HCT116 (cell line): ENCODE measurements at regions of chr1 and their contacts with region 1.

Region 1: DNA sequence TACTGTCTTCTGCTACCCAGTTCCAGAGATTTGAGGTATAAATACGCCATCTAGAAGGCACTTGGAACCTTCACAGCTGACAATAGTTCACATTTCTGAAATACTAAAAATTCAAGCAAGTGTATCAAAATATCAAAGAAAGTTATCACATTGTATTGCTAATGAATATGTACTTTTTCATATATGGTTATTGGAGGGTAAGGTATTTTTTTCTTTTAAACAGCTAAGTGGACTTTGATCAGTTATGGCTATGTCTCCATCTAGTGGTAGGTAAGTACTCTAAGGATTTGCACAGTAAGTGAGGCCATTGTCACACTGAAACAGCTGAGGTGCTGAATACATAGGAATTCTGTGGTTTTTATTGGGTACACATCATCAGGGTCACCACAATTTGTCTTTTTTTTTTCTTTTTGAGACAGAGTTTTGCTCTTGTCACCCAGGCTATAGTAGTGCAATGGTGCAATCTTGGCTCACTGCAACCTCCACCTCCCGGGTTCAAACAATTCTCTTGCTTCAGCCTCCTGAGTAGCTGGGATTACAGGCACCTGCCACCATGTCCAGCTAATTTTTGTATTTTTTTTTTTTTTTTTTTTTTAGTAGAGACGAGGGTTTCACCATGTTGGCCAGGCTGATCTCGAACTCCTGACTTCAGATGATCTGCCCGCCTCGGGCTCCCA is 49.1 kb upstream of the CR2 start:
- DNase-seq: peak; percentile 65
- ATAC-seq: peak; percentile 87
- H3K4me3 ChIP-seq: no peak overlapping the region
- H3K27ac ChIP-seq: no peak overlapping the region
- H3K4me1 ChIP-seq: no peaks in the 10 kb centered on the region
- H3K27me3 ChIP-seq: no peaks in the 10 kb centered on the region
- CTCF ChIP-seq: peak; percentile 63 to 96 (median 77)
- POLR2A ChIP-seq: no peak
- RAD21 ChIP-seq: peak; percentile 95

Region 2: DNA sequence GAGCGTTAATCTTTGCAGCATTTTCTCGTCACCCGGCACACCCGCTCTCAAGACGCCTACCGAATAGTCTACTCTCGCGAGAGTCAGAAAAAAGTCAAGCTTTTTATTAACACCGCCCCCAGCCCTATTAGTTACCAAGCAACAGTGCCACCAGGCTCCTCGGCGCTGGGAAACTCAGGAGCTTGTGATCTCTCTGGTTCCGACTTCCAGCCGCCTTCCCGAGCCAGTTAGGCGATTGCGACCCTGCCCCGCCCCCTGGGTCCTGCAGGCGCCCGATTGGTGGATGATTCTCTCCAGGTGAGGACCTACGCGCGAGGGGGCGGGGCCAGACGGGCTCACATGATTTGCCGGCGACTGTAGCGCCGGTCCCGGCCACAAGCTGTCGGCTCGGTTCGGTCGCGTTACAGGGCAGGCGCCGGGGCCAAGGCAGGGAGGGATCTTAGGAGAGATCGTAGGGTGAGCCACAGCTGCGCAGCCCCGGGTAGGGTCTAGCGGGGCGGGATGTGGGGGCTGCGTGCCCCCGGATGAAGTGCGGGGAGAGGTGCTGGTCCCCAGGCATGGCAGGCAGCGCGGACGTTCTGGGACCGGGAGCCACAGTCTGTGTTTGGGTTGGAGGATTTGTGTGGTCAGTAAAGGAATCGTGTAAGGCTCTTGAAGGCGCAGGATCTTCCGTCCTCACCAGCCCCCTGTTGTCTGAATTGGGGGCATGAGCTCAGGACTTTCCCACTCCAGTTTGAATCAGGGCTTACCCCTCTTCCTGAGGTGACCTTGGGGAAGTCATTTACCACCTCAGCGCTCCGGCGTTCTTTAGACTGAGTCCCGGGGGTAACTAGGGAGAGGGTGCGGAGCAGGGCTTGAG is 351.8 kb before region 1 on chr1 and contains the start of gene PFKFB2:
- CTCF ChIA-PET with region 1: interaction called, 13 read pairs
- POLR2A ChIA-PET with region 1: interaction called, 3 read pairs
- RAD21 ChIA-PET with region 1: no interaction called
- intact Hi-C with region 1: no loop called
- DNase-seq: peak; percentile 99
- ATAC-seq: peak; percentile 89
- H3K4me3 ChIP-seq: peak within 1 kb of the TSS; percentile 88 to 90
- H3K27ac ChIP-seq: peak within 1 kb of the TSS; percentile 85
- H3K4me1 ChIP-seq: peaks cover 11 to 29% of the 10 kb centered on the region in 2 experiments
- H3K27me3 ChIP-seq: no peaks in the 10 kb centered on the region
- CTCF ChIP-seq: 0 out of 6 replicates have a peak, but pooled peaks of 1 of the 3 experiments have one; percentile 19
- POLR2A ChIP-seq: peak; percentile 72
- RAD21 ChIP-seq: no peak
- total RNA-seq, gene PFKFB2: 13.9 TPM

Region 3: GRCh38 chr1:207077470-207078377 is 327.3 kb before region 1 on chr1:
- CTCF ChIA-PET with region 1: interaction called, 19 read pairs
- POLR2A ChIA-PET with region 1: no interaction called
- RAD21 ChIA-PET with region 1: no interaction called
- intact Hi-C with region 1: loop called (anchors 2 kb)
- DNase-seq: peak; percentile 51
- ATAC-seq: peak; percentile 91
- H3K4me3 ChIP-seq: no peak overlapping the region
- H3K27ac ChIP-seq: no peak overlapping the region
- H3K4me1 ChIP-seq: no peaks in the 10 kb centered on the region
- H3K27me3 ChIP-seq: no peaks in the 10 kb centered on the region
- CTCF ChIP-seq: peak; percentile 82 to 87 (median 84); a peak in 5 of 6 replicates
- POLR2A ChIP-seq: no peak
- RAD21 ChIP-seq: peak; percentile 93

Region 4: GRCh38 chr1:207084701-207085180 is 320.2 kb before region 1 on chr1:
- CTCF ChIA-PET with region 1: interaction called, 49 read pairs
- POLR2A ChIA-PET with region 1: no interaction called
- RAD21 ChIA-PET with region 1: interaction called, 4 to 12 read pairs
- intact Hi-C with region 1: loop called (anchors 1 kb)
- DNase-seq: peak; percentile 69
- ATAC-seq: peak; percentile 99
- H3K4me3 ChIP-seq: no peak overlapping the region
- H3K27ac ChIP-seq: no peak overlapping the region
- H3K4me1 ChIP-seq: peaks cover 0 to 4% of the 10 kb centered on the region in 2 experiments; a peak in 2 of 4 replicates
- H3K27me3 ChIP-seq: 0 out of 2 replicates have a peak, but pooled peaks cover 3% of the 10 kb centered on the region
- CTCF ChIP-seq: peak; percentile 61 to 84 (median 62)
- POLR2A ChIP-seq: no peak
- RAD21 ChIP-seq: peak; percentile 85

Region 5: GRCh38 chr1:207128336-207128921 is 276.6 kb before region 1 on chr1:
- CTCF ChIA-PET with region 1: no interaction called
- POLR2A ChIA-PET with region 1: no interaction called
- RAD21 ChIA-PET with region 1: no interaction called
- intact Hi-C with region 1: no loop called
- DNase-seq: no peak
- ATAC-seq: no peak
- H3K4me3 ChIP-seq: no peak overlapping the region
- H3K27ac ChIP-seq: no peak overlapping the region
- H3K4me1 ChIP-seq: no peaks in the 10 kb centered on the region
- H3K27me3 ChIP-seq: no peaks in the 10 kb centered on the region
- CTCF ChIP-seq: no peak
- POLR2A ChIP-seq: no peak
- RAD21 ChIP-seq: no peak

Region 6: GRCh38 chr1:207152792-207153434 is 252.1 kb before region 1 on chr1:
- CTCF ChIA-PET with region 1: no interaction called
- POLR2A ChIA-PET with region 1: no interaction called
- RAD21 ChIA-PET with region 1: no interaction called
- intact Hi-C with region 1: loop called (anchors 10 kb)
- DNase-seq: peak; percentile 99
- ATAC-seq: peak; percentile 94
- H3K4me3 ChIP-seq: peak overlapping the region; percentile 61 to 93
- H3K27ac ChIP-seq: peak overlapping the region; percentile 92
- H3K4me1 ChIP-seq: peaks cover 2% of the 10 kb centered on the region in 2 experiments; a peak in 1 of 4 replicates
- H3K27me3 ChIP-seq: no peaks in the 10 kb centered on the region
- CTCF ChIP-seq: no peak
- POLR2A ChIP-seq: peak; percentile 72
- RAD21 ChIP-seq: 0 out of 2 replicates have a peak, but pooled peaks have one; percentile 26

Region 7: DNA sequence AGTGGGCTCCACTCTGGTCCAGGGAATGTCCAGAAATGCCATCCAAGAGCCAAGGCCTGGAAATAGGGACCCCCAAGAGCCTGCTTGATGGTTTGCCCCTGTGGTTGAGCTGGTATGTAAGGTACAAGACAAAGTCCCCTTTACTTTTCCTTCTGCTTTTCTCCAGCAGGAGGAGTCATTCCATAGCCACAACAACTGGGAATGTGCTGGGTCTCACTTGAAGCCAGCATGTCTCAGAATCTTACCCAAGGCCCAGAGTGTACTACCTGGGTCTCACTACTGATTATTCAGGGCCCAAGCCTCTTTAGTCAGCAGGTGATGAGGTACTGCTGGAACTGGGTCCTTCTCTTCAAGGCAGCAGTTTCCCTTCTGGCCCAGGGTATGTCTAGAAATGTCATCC is 145.6 kb before region 1 on chr1:
- CTCF ChIA-PET with region 1: interaction called, 25 read pairs
- POLR2A ChIA-PET with region 1: no interaction called
- RAD21 ChIA-PET with region 1: interaction called, 4 to 5 read pairs
- intact Hi-C with region 1: loop called (anchors 1 kb)
- DNase-seq: peak; percentile 27
- ATAC-seq: peak; percentile 79
- H3K4me3 ChIP-seq: no peak overlapping the region
- H3K27ac ChIP-seq: no peak overlapping the region
- H3K4me1 ChIP-seq: no peaks in the 10 kb centered on the region
- H3K27me3 ChIP-seq: no peaks in the 10 kb centered on the region
- CTCF ChIP-seq: peak; percentile 56 to 66 (median 59); a peak in 5 of 6 replicates
- POLR2A ChIP-seq: no peak
- RAD21 ChIP-seq: peak; percentile 84

Region 8: DNA sequence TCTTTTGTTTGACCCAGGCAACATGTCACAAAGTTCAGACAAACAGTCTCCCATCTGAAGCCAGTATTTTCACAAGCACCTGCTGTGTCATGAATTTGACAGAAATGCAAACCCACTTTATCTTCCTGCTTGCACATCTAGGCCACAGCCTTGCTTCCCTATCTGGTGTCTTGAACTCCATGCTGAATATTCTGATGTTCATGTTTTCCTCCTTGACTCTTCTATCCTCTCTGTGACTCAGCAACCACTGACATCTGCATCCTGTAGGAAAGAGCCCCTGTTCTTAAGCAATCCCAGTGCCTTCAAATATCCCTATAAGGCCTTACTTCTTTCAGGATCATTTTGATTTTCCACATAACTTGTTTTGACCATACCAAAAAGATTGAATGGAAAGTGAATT is 77.0 kb before region 1 on chr1:
- CTCF ChIA-PET with region 1: no interaction called
- POLR2A ChIA-PET with region 1: no interaction called
- RAD21 ChIA-PET with region 1: no interaction called
- intact Hi-C with region 1: no loop called
- DNase-seq: no peak
- ATAC-seq: no peak
- H3K4me3 ChIP-seq: no peak overlapping the region
- H3K27ac ChIP-seq: no peak overlapping the region
- H3K4me1 ChIP-seq: no peaks in the 10 kb centered on the region
- H3K27me3 ChIP-seq: no peaks in the 10 kb centered on the region
- CTCF ChIP-seq: no peak
- POLR2A ChIP-seq: no peak
- RAD21 ChIP-seq: no peak

Region 9: GRCh38 chr1:207423560-207424292 is 18.7 kb after region 1 on chr1:
- CTCF ChIA-PET with region 1: no interaction called
- POLR2A ChIA-PET with region 1: no interaction called
- RAD21 ChIA-PET with region 1: no interaction called
- intact Hi-C with region 1: no loop called
- DNase-seq: no peak
- ATAC-seq: peak; percentile 80
- H3K4me3 ChIP-seq: peak overlapping the region; percentile 1 to 4; a peak in 1 of 4 replicates
- H3K27ac ChIP-seq: no peak overlapping the region
- H3K4me1 ChIP-seq: no peaks in the 10 kb centered on the region
- H3K27me3 ChIP-seq: no peaks in the 10 kb centered on the region
- CTCF ChIP-seq: no peak
- POLR2A ChIP-seq: no peak
- RAD21 ChIP-seq: no peak

Region 10: GRCh38 chr1:207499573-207499972 is 94.6 kb after region 1 on chr1:
- CTCF ChIA-PET with region 1: interaction called, 7 read pairs
- POLR2A ChIA-PET with region 1: no interaction called
- RAD21 ChIA-PET with region 1: no interaction called
- intact Hi-C with region 1: loop called (anchors 2 kb)
- DNase-seq: peak; percentile 59
- ATAC-seq: peak; percentile 98
- H3K4me3 ChIP-seq: no peak overlapping the region
- H3K27ac ChIP-seq: no peak overlapping the region
- H3K4me1 ChIP-seq: no peaks in the 10 kb centered on the region
- H3K27me3 ChIP-seq: peaks cover 5% of the 10 kb centered on the region; the same call in 1 of the 2 replicates
- CTCF ChIP-seq: peak; percentile 62 to 89 (median 81)
- POLR2A ChIP-seq: no peak
- RAD21 ChIP-seq: peak; percentile 97